ENCODE measurements at regions of chr12 and their contacts with region 1.

Region 1: GRCh38 chr12:117119592-117120198 is 20.5 kb upstream of the TESC start:
- DNase-seq: peak in 1 of 2 experiments; percentile 79
- H3K4me3 ChIP-seq: no peak overlapping the region
- H3K27ac ChIP-seq: no peak overlapping the region
- H3K4me1 ChIP-seq: peaks cover 0 to 7% (median 3%) of the 10 kb centered on the region in 4 experiments; a peak in 6 of 7 replicates
- H3K27me3 ChIP-seq: no peaks in the 10 kb centered on the region
- CTCF ChIP-seq: peak; percentile 63 to 89 (median 86)
- EP300 ChIP-seq: no peak
- POLR2A ChIP-seq: no peak
- RAD21 ChIP-seq: peak; percentile 88 to 95

Region 2: DNA sequence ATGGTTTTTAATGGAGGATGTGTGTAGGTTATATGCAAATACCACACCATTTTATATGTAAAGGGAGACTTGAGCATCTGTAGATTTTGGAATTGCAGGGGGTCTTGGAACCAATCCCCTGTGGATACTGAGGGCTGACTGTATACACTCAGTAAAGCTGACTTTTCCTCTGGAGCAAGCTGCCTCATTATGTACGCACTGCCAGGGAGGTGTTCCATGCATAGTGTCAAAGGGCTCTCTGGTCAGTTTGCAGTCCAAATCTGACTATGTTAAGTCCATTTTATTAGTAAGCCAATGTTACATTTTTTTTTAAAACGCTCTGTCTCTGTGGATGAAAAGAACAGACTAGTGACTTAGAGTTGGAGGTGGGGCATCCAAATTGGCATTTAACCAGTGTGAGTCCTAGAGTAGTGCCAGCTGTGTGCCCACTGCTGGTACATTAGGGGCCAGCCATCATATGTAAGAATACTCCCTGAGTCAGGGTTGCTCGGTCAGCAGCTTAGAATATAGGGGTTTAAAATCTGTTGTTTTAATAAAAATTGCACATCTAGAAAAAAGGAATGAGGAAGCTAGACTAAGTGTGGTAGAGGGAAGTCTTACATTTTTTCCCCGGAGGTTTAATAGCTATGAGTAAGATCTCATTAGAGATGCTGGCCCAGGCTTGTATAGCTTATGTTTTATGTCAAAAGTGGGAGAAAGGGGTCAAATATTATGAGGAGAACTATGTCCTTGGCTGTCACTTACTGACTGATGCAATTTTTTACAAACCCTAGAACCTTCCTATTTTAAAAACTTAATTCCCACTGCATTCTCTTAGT is 107.5 kb before region 1 on chr12:
- CTCF ChIA-PET with region 1: interaction called, 12 read pairs
- POLR2A ChIA-PET with region 1: no interaction called
- DNase-seq: no peak
- H3K4me3 ChIP-seq: no peak overlapping the region
- H3K27ac ChIP-seq: no peak overlapping the region
- H3K4me1 ChIP-seq: peaks cover 4 to 24% (median 15%) of the 10 kb centered on the region in 4 experiments
- H3K27me3 ChIP-seq: no peaks in the 10 kb centered on the region
- CTCF ChIP-seq: no peak
- EP300 ChIP-seq: no peak
- POLR2A ChIP-seq: no peak
- RAD21 ChIP-seq: no peak

Region 3: DNA sequence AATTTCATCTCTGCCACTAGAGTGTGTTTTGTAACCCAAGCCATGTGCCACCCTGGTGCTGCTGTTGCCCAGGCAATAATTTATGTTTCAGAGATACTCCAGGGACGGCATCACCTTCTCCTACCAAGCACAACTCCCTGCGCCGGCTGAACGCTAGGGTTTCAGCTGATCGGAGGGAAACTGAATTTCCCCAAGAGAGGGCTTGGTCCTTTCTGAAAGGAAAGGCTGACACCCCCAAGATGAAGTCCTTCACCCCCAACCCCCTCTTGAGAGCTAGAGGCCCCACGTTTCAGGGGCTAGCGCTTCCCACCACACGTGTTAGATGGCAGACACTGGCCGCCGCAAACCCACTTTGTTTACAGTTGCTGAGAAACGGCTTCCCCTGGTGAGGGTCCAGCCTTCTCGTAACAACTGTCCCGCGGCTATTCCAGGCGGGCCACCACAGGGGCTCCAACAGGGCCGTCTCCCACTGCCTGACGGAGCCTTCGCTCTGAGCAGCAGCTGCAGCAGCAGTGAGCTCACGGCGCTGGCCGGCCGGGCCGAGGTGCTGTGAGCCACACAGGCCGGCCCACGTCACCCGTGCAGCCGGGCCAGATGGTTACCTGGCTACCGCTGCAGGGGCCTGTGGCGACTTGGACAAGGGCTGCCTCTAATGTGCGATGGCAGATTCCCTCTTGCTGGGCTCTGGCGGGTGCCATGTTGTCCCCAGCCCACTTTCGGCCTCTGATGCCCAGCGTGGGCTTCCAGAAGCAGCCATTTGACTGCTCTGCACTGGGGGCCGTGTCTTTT is 86.9 kb before region 1 on chr12:
- CTCF ChIA-PET with region 1: interaction called, 161 read pairs
- POLR2A ChIA-PET with region 1: interaction called, 6 read pairs
- DNase-seq: no peak
- H3K4me3 ChIP-seq: no peak overlapping the region
- H3K27ac ChIP-seq: no peak overlapping the region
- H3K4me1 ChIP-seq: peaks cover 0 to 10% (median 3%) of the 10 kb centered on the region in 4 experiments; a peak in 4 of 7 replicates
- H3K27me3 ChIP-seq: no peaks in the 10 kb centered on the region
- CTCF ChIP-seq: no peak
- EP300 ChIP-seq: no peak
- POLR2A ChIP-seq: no peak
- RAD21 ChIP-seq: no peak

Region 4: DNA sequence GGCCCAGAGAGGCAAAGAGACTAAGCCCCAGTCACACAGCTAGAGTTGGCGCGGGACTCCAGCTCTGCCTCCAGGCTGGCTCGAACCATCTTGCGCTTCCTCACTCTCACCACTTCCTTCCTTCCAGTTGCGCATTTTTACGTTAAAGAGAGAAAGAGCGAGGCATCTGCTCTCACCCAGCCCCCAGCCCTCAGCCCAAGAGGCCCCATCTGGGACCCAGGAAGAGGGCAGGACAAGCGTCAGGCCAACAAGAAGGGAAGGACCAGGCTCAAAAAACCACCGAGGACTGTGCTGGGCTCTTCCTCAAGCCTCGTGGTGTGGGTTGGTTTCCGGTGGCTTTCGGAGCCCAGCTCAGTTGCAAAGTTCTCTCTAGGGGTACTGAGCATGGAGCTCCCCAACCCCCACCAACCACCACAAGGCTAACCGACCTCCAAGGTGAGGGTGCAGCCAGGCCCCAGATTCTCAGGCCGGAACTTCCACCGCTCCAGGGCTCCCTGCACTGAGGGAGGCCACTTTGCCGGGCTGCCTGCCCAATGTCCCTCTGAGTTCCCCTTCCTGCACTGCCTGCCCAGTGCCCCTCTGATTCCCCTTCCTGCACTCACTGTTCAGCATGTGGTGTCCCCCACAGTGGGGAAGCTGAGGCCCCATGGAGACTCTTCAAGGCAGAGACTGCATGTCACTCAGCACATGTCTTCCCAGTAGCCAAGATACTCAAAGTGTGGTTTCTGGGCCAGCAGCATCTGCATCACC is 56.4 kb before region 1 on chr12:
- CTCF ChIA-PET with region 1: interaction called, 18 read pairs
- POLR2A ChIA-PET with region 1: no interaction called
- DNase-seq: no peak
- H3K4me3 ChIP-seq: no peak overlapping the region
- H3K27ac ChIP-seq: no peak overlapping the region
- H3K4me1 ChIP-seq: peaks cover 0 to 19% (median 12%) of the 10 kb centered on the region in 4 experiments; a peak in 6 of 7 replicates
- H3K27me3 ChIP-seq: no peaks in the 10 kb centered on the region
- CTCF ChIP-seq: no peak
- EP300 ChIP-seq: no peak
- POLR2A ChIP-seq: no peak
- RAD21 ChIP-seq: no peak

Region 5: DNA sequence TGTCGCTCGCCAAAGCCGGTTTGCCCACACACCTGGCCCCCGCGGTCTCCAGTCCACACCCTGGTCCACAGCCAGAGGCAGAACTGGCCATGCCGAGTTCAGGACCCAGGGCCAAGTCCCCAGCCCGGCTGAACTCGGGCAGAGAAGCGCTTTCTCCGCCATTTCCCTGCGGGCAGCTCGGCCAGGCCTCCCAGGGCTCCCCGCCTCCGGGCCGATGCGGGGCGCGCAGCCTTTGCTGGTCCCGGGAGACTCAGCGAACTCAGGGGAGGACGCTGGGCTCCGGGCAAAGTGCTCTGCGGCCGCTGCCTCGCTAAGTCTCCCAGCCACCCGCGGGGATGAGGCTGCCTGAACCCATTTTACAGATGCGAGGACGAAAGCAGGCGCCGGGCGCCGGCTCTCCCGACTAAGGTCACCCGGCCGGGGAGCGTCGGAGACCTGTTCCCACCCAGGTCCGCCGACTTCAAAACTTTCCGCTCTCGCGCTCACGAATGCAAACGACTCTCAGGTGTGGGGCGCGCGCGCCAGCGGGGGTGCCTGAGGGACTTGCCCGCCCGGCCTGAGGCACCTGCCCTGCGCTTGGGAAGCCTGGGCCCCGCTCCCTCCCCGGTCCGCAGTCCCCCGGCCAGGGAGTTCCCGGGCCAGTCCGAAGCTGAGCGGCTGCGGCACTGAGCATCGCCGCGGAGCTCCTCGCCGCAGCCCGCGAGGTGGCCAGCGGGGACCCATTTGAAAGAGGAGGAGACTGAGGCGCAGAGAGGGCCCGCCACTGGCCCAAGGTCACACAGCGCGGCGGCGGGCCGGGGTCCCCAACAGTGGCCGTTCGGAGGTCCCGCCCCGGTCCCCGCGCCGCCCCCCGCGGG is 21.1 kb before region 1 on chr12:
- CTCF ChIA-PET with region 1: interaction called, 43 read pairs
- POLR2A ChIA-PET with region 1: interaction called, 3 read pairs
- DNase-seq: peak in 1 of 2 experiments; percentile 62
- H3K4me3 ChIP-seq: peak overlapping the region; percentile 65 to 95 (median 68)
- H3K27ac ChIP-seq: no peak overlapping the region
- H3K4me1 ChIP-seq: peaks cover 0 to 5% (median 1%) of the 10 kb centered on the region in 4 experiments; a peak in 3 of 7 replicates
- H3K27me3 ChIP-seq: peaks cover 5 to 15% (median 10%) of the 10 kb centered on the region in 4 experiments
- CTCF ChIP-seq: no peak
- EP300 ChIP-seq: no peak
- POLR2A ChIP-seq: no peak
- RAD21 ChIP-seq: no peak

Region 6: GRCh38 chr12:117143008-117143532 is 23.4 kb after region 1 on chr12:
- CTCF ChIA-PET with region 1: interaction called, 12 read pairs
- POLR2A ChIA-PET with region 1: no interaction called
- DNase-seq: no peak
- H3K4me3 ChIP-seq: no peak overlapping the region
- H3K27ac ChIP-seq: no peak overlapping the region
- H3K4me1 ChIP-seq: peaks cover 0 to 5% (median 0%) of the 10 kb centered on the region in 4 experiments; a peak in 3 of 7 replicates
- H3K27me3 ChIP-seq: no peaks in the 10 kb centered on the region
- CTCF ChIP-seq: no peak
- EP300 ChIP-seq: no peak
- POLR2A ChIP-seq: no peak
- RAD21 ChIP-seq: no peak

Region 7: GRCh38 chr12:117333331-117333881 is 213.7 kb after region 1 on chr12:
- CTCF ChIA-PET with region 1: no interaction called
- POLR2A ChIA-PET with region 1: no interaction called
- DNase-seq: no peak
- H3K4me3 ChIP-seq: no peak overlapping the region
- H3K27ac ChIP-seq: no peak overlapping the region
- H3K4me1 ChIP-seq: peaks cover 0 to 5% (median 0%) of the 10 kb centered on the region in 4 experiments; a peak in 3 of 7 replicates
- H3K27me3 ChIP-seq: no peaks in the 10 kb centered on the region
- CTCF ChIP-seq: no peak
- EP300 ChIP-seq: no peak
- POLR2A ChIP-seq: no peak
- RAD21 ChIP-seq: no peak

Measured in H1 (cell line).